K562 (cell line): ENCODE measurements at regions of chr1 and their contacts with region 1.

Region 1: GRCh38 chr1:244214009-244214967 is 163.2 kb downstream of the ZBTB18 start:
- DNase-seq: no peak
- ATAC-seq: no peak
- H3K4me3 ChIP-seq: no peak overlapping the region
- H3K27ac ChIP-seq: no peak overlapping the region
- H3K4me1 ChIP-seq: peaks cover 0 to 5% of the 10 kb centered on the region in 2 experiments; a peak in 1 of 5 replicates
- H3K27me3 ChIP-seq: peaks cover 9 to 44% of the 10 kb centered on the region in 2 experiments; a peak in 3 of 5 replicates
- CTCF ChIP-seq: no peak
- EP300 ChIP-seq: no peak
- POLR2A ChIP-seq: no peak
- RAD21 ChIP-seq: no peak

Region 2: GRCh38 chr1:243837907-243838535 is 376.3 kb before region 1 on chr1:
- CTCF ChIA-PET with region 1: no interaction called
- POLR2A ChIA-PET with region 1: no interaction called
- in situ Hi-C with region 1: no loop called
- intact Hi-C with region 1: no loop called
- DNase-seq: no peak
- ATAC-seq: no peak
- H3K4me3 ChIP-seq: no peak overlapping the region
- H3K27ac ChIP-seq: no peak overlapping the region
- H3K4me1 ChIP-seq: no peaks in the 10 kb centered on the region
- H3K27me3 ChIP-seq: no peaks in the 10 kb centered on the region
- CTCF ChIP-seq: no peak
- EP300 ChIP-seq: no peak
- POLR2A ChIP-seq: no peak
- RAD21 ChIP-seq: no peak

Region 3: DNA sequence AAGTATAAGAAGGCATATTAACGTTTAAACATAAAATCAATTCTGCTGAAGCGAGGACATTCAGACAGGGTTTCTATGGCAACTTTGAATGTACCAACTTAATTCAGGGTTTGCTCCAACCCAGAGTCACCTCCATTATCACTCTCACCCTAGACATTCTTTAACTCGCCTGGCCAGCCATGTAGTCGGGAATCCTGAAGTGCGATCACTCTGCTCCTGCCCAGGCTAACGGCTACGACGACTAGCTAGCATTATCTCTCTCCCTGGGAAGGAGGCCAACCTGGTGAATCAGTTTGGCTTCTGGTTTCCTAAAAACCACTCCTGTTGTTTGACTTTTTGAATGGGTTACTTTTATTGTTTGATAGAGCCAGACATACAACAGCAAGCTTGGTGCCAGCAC is 202.1 kb before region 1 on chr1:
- CTCF ChIA-PET with region 1: no interaction called
- POLR2A ChIA-PET with region 1: no interaction called
- in situ Hi-C with region 1: no loop called
- intact Hi-C with region 1: loop called (anchors 10 kb)
- DNase-seq: no peak
- ATAC-seq: no peak
- H3K4me3 ChIP-seq: no peak overlapping the region
- H3K27ac ChIP-seq: no peak overlapping the region
- H3K4me1 ChIP-seq: no peaks in the 10 kb centered on the region
- H3K27me3 ChIP-seq: peaks cover 14 to 27% of the 10 kb centered on the region in 2 experiments; a peak in 3 of 5 replicates
- CTCF ChIP-seq: no peak
- EP300 ChIP-seq: no peak
- POLR2A ChIP-seq: no peak
- RAD21 ChIP-seq: no peak